ENCODE measurements at regions of chr10 and their contacts with region 1.

Region 1: GRCh38 chr10:128859738-128860386 is 607.2 kb upstream of the MGMT start:
- DNase-seq: no peak
- ATAC-seq: no peak

Region 2: GRCh38 chr10:128463991-128464760 is 395.7 kb before region 1 on chr10:
- intact Hi-C with region 1: no loop called
- DNase-seq: no peak
- ATAC-seq: peak; percentile 86

Region 3: GRCh38 chr10:128633864-128634540 is 225.9 kb before region 1 on chr10:
- intact Hi-C with region 1: loop called (anchors 2 kb)
- DNase-seq: no peak
- ATAC-seq: peak; percentile 63

Measured in Right ventricle myocardium inferior (tissue), 1 donor.